Mammary epithelial cell (primary cell): ENCODE measurements at regions of chr1 and their contacts with region 1.

Region 1: DNA sequence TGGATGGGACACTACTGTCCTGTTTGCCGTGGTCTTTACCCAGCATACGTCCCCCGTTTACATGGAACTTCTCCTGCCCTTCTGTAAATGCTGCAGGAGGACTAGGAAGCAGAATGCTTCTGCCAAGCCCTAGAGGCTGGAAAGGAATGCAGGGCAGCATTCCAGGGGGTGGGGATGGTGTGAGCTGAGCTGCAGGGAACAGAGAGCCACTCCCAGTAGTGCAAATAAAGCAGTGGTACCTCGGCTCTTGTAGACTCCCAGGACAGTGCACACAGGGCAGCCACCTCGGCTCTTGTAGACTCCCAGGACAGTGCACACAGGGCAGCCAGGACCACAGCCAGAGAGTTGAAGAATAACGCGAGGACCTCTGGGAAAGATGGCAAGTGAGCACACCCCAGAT is 35.4 kb downstream of the PTPRU start:
- DNase-seq: peak; percentile 41
- H3K4me3 ChIP-seq: no peak overlapping the region
- H3K27ac ChIP-seq: no peak overlapping the region
- H3K4me1 ChIP-seq: peaks cover 16% of the 10 kb centered on the region
- H3K27me3 ChIP-seq: no peaks in the 10 kb centered on the region
- CTCF ChIP-seq: no peak

Region 2: DNA sequence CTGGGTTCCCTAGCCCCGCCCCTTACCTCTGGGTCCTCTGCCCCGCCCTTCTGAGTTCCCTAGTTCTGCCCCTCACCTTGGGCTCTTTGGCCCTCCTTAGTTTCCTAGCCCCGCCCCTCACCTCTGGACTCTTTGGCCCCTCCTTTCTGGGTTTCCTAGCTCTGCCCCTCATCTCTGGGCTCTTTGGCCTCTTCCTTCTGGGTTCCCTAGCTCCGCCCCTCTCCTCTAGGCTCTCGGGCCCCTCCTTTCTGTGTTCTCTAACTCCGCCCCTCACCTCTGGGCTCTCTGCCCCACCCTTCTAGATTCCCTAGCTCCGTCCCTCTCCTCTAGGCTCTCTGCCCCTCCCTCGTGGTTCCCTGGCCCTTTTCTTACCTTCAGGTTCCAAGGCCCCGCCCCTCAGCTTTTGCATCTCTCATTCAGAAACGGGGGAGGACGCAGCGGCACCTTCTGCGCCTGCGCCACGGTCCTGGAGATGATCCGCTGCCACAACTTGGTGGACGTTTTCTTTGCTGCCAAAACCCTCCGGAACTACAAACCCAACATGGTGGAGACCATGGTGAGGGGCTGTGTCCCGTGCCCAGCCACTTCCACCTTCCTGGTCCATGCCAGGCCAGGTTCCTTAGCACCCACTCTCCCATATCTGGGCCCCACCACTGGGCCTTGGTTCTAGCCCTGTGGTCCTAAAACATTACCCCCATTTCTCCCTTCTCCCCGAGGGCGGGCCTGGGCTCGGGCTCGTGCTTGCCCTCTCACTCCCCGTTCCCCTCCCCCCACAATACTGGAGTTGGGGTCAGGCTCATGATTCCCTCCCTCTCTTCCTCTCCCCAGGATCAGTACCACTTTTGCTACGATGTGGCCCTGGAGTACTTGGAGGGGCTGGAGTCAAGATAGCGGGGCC is 53.3 kb after region 1 on chr1:
- CTCF ChIA-PET with region 1: no interaction called
- dilution Hi-C with region 1: loop called (anchors 5 kb)
- in situ Hi-C with region 1: no loop called
- intact Hi-C with region 1: no loop called
- DNase-seq: no peak
- H3K4me3 ChIP-seq: no peak overlapping the region
- H3K27ac ChIP-seq: no peak overlapping the region
- H3K4me1 ChIP-seq: no peaks in the 10 kb centered on the region
- H3K27me3 ChIP-seq: no peaks in the 10 kb centered on the region
- CTCF ChIP-seq: no peak